ENCODE measurements at regions of chr5 and their contacts with region 1.

Region 1: DNA sequence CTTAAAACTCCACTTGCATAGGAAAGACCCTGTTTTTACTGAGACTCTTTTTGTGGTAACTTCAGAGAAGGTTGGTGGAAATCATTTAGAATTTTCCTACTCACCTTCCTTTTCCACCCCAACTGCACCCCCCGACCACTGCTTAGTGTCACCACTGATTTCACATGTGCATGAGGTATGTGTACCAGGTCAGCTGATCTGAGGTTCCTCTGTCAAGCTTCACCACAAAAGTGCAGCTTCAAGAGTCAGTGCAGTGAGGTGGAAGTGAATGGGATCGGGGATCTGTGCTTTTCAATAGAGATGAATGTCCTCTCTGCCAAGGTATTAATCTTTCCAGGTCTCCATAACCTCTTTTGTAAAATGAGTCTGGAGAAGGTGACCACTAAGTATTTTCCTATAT is 260.5 kb upstream of the WWC1 start:
- DNase-seq: no peak
- H3K4me3 ChIP-seq: no peak overlapping the region
- H3K27ac ChIP-seq: no peak overlapping the region
- H3K4me1 ChIP-seq: no peaks in the 10 kb centered on the region
- H3K27me3 ChIP-seq: peaks cover 4% of the 10 kb centered on the region
- CTCF ChIP-seq: no peak
- EP300 ChIP-seq: no peak
- POLR2A ChIP-seq: no peak

Region 2: GRCh38 chr5:168064933-168065622 is 34.2 kb after region 1 on chr5:
- in situ Hi-C with region 1: no loop called
- intact Hi-C with region 1: loop called (anchors 1 kb)
- DNase-seq: no peak
- H3K4me3 ChIP-seq: peak overlapping the region in 1 of 4 donors; percentile 21
- H3K27ac ChIP-seq: no peak overlapping the region
- H3K4me1 ChIP-seq: no peaks in the 10 kb centered on the region
- H3K27me3 ChIP-seq: no peaks in the 10 kb centered on the region
- CTCF ChIP-seq: no peak
- EP300 ChIP-seq: no peak
- POLR2A ChIP-seq: no peak

Measured in transverse colon (tissue), 4 donors.